Posterior cingulate gyrus (tissue), 11 donors: ENCODE measurements at regions of chr7 and their contacts with region 1.

Region 1: DNA sequence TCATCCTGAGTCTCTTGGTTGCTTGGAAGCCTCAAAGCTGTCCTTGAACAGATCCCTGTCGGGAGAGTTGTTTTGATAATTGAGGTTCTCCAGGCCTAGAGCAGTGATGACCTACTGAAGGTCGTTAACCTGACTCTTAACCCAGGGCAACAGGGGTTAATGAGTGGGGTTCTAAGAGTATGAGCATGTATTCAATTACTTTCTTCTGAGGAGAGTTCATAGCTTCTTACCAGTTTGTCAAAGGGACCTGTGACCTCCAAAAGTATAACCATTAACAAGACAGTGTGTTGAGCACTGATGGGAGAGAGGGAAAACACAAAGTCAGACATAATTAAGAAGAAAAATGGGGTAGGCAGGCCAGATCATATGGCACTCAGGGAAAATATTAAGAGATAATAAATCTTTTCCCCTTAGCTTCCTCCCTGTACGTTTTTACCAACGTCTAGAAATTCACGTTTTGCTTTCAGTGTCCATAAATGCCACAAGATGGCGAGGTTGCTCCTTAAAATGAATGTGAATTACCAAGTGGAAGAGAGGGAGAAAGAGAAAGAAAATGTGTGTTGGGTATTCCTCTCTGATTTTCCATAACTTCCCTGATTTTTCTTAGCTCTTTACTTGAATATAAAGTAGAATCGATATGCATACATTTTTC is 97.6 kb downstream of the SUGCT start:
- DNase-seq: no peak

Region 2: GRCh38 chr7:39952374-39952773 is 280.0 kb before region 1 on chr7:
- intact Hi-C with region 1: no loop called
- DNase-seq: no peak

Region 3: DNA sequence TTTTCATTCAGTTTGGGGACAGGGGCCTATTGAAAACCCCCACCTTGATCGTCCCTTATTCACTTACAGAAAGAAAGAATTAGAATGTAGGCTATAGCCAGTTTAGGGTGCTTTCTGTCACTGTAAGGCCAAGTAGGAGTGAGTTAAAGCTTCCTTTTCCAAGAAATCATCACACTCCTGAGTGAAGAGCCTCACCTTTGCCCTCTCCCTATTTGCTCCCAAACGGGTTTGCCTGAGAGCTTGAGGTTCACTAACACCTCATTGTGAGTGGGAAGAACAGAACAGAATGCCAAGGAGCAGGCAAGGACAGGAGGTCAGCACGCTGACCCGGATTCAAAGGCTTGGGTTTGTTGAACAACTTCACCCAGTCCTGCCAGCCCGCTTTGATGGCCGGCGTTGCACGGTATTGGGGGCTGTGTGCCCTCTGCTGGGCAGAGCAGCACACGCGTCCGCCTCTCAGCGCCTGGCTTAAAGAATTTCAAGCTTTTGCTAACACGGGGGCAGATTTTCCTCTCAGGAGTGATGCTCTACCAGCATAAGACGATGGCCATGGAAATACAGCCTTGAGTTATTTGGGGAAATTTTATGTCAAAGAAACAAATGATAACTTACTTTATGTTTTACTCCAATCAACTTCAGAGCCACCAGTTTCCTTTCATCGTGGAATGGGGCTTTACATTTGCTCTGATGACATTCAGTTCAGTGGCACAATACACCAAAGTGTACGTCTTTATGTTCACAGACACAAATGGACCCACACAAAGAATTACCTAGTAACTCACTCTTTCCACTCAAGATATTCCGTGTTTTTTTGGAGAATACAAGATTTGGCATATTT is 372.5 kb after region 1 on chr7:
- intact Hi-C with region 1: loop called (anchors 10 kb)
- DNase-seq: peak; percentile 11 to 91 (median 48)

Region 4: DNA sequence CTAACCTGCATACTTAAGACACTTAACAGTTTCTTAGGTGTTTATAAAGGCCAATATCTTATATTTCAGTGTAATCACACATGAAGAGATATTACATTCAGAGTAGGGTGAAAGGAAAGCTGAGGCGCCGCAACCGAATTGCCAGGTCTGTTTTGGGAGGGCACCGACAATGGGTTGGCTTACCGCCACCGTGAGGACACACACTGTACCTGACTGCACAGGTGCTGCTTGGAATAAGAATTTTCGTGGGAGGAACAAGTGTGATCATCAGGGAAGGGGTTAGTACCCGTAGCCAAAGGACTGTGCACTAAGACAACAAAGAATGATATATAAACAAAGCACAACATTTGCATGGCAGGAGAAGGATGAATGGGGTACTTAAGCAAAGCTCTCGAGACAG is 494.2 kb after region 1 on chr7:
- intact Hi-C with region 1: no loop called
- DNase-seq: no peak

Region 5: GRCh38 chr7:40763318-40764287 is 531.2 kb after region 1 on chr7:
- intact Hi-C with region 1: loop called (anchors 2 kb)
- DNase-seq: no peak

Region 6: DNA sequence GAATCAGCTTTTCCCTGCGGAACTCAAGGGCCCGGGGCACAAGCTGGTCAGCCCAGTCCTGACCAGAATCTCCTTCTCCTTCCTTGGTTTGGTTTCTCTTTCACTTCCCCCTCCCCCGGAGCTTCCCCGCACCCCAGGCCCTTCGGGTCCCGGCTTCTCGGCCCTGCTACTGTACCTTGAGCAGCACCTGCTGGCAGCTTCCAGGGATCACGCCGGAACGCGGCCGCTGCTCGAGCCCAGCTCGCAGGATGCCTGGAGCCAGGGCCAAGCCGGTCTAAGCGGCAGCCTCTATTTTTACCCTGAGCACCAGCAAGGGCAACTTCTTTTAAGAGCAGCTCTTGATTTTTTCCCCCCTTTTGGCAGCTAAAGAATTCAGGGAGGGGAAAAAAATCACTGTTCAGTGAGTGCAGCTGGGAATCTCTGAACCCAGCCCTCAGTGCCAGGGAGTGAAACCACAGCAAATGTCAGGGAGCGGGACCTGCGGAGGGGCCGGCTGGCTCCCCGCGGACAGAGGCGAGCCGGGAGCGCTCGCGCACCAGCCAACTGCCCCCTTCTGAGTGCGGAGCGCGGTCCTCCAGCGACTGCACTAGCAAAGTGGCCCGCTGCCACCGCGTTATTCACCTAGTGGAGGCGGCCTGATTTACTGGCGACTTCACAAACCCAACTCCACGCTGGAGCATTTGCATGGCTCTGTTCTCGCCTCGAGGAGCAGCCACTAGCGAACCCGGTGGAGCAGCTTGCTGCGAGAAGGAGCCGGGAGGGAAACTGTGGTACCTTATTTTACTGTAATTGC is 1472.9 kb after region 1 on chr7:
- intact Hi-C with region 1: loop called (anchors 5 kb)
- DNase-seq: peak; percentile 61 to 95 (median 78)

Region 7: DNA sequence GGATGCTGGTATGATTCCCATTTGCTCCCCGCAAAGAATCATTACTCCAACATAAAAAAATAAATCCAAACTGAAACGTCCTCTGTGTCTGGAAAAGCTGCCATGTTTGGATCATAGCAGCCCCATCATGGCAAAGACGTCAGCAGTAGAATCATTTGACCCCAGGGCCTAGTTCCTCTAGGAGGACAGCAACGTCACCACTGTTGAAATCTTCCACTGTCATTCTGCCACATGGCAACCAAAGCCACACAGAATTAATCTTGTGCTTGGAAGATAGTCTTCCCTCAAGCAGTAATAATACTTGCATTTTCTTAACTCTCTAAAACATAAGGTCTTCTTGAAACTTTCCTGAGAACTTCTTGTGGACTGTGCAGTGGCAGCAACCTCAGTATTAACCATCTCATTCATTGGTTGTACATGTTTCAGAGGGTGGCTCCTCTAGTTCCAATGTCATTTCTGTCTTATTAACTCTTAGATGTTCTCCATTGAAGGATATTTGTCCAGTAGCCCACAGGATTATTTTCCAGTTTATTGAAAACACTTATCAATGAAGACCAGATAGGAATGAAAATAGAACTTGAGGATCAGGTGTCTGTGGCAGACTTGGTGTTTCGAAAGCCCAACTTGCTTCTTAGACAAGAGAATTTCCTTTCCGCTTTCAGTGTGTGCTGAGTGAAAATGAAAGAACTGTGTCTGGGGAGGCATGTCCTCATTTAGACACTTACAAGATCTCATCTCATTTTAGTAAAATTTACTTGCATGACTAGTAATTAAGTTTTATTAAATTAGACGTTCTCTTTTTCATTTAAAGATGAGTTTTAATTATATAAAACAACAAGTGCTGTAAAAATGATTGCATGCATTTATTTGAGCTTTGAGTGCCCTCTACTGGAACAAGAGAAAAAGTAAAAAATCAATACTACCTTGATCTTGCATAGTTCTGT is 1499.4 kb after region 1 on chr7:
- intact Hi-C with region 1: loop called (anchors 10 kb)
- DNase-seq: no peak